ENCODE measurements at regions of chr4 and their contacts with region 1.

Region 1: GRCh38 chr4:76984127-76984526 is 34.6 kb downstream of the SEPTIN11 start:
- DNase-seq: peak; percentile 84
- H3K4me3 ChIP-seq: peak overlapping the region in 1 of 3 experiments; percentile 1
- H3K27ac ChIP-seq: peak overlapping the region; percentile 65
- H3K4me1 ChIP-seq: peaks cover 41% of the 10 kb centered on the region
- H3K27me3 ChIP-seq: no peaks in the 10 kb centered on the region
- CTCF ChIP-seq: peak; percentile 46 to 51
- POLR2A ChIP-seq: no peak

Region 2: GRCh38 chr4:76511947-76512346 is 472.2 kb before region 1 on chr4:
- CTCF ChIA-PET with region 1: no interaction called
- POLR2A ChIA-PET with region 1: no interaction called
- dilution Hi-C with region 1: no loop called
- intact Hi-C with region 1: loop called (anchors 1 kb)
- DNase-seq: no peak
- H3K4me3 ChIP-seq: no peak overlapping the region
- H3K27ac ChIP-seq: no peak overlapping the region
- H3K4me1 ChIP-seq: no peaks in the 10 kb centered on the region
- H3K27me3 ChIP-seq: no peaks in the 10 kb centered on the region
- CTCF ChIP-seq: no peak
- POLR2A ChIP-seq: no peak

Region 3: DNA sequence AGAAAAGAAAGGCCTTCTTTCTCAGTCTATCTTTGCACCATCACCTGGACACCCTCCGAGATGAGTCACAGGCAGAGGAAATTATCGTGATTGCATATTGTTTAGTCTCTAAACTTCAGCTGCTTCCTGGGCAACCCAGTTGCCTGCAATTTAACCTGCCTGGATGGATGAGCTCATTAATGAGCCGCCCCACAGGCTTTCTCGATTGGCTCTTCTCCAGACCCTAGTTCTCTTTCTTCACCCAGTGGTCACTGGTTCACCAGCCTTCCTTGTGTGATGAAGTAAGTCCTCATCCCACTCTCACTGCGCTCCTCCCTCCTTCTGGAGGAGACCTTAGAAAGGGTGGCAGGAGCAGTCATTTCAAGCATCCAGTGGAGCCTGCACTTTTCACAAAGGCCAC is 180.6 kb before region 1 on chr4:
- CTCF ChIA-PET with region 1: no interaction called
- POLR2A ChIA-PET with region 1: no interaction called
- dilution Hi-C with region 1: no loop called
- intact Hi-C with region 1: loop called (anchors 1 kb)
- DNase-seq: peak; percentile 89
- H3K4me3 ChIP-seq: no peak overlapping the region
- H3K27ac ChIP-seq: peak overlapping the region; percentile 66
- H3K4me1 ChIP-seq: peaks cover 19% of the 10 kb centered on the region
- H3K27me3 ChIP-seq: no peaks in the 10 kb centered on the region
- CTCF ChIP-seq: no peak
- POLR2A ChIP-seq: no peak

Region 4: DNA sequence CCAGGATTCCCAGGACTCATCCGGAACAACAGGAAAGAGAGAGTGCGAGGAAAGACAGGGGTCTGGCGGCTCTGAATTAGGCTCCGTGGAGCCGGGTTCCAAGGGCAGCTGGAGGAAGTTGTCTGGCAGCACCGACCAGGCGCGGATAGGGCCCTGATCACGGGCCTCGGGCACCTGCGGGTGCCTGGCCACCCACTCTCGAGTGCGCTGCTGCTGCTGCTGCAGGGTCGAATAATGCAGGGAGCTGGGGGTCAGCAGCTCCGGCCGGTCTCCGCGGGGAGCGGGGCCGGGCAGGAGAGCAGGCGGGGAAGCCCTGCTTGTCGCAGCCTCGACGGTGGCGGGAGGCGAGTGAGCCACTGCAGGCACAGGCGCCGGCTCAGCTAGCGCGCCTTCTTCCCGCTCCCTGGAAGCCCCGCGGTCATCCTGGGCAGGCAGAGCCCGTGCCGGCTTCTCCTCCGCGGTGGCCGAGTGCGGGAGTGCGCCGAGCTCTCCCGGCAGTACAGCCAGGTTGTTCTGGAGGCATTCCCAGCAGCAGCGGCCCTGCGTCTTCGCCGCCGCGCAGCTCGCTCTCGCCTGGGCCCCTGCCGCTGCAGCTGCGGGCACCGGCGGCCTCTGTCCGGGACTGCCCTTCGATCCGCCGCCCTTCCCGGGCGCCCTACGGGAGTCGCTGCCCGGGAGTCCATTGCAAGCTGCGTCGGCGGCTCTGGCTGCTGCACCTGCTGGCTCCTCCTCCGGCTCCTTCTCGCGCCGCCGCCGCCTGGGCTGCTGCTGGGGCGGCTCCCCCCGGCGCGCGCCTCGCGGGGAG is 87.2 kb before region 1 on chr4:
- CTCF ChIA-PET with region 1: no interaction called
- POLR2A ChIA-PET with region 1: no interaction called
- dilution Hi-C with region 1: no loop called
- intact Hi-C with region 1: loop called (anchors 1 kb)
- DNase-seq: peak; percentile 35
- H3K4me3 ChIP-seq: peak overlapping the region in 2 of 3 experiments; percentile 2 to 35
- H3K27ac ChIP-seq: no peak overlapping the region
- H3K4me1 ChIP-seq: peaks cover 4% of the 10 kb centered on the region
- H3K27me3 ChIP-seq: peaks cover 42 to 75% of the 10 kb centered on the region in 2 experiments
- CTCF ChIP-seq: no peak
- POLR2A ChIP-seq: no peak

Region 5: GRCh38 chr4:76969941-76970529 is 14.1 kb before region 1 on chr4:
- CTCF ChIA-PET with region 1: no interaction called
- POLR2A ChIA-PET with region 1: no interaction called
- dilution Hi-C with region 1: no loop called
- intact Hi-C with region 1: no loop called
- DNase-seq: no peak
- H3K4me3 ChIP-seq: no peak overlapping the region
- H3K27ac ChIP-seq: no peak overlapping the region
- H3K4me1 ChIP-seq: peaks cover 5% of the 10 kb centered on the region
- H3K27me3 ChIP-seq: no peaks in the 10 kb centered on the region
- CTCF ChIP-seq: no peak
- POLR2A ChIP-seq: no peak

Region 6: GRCh38 chr4:76996445-76996844 is 12.3 kb after region 1 on chr4:
- CTCF ChIA-PET with region 1: interaction called, 10 read pairs
- POLR2A ChIA-PET with region 1: no interaction called
- dilution Hi-C with region 1: no loop called
- intact Hi-C with region 1: no loop called
- DNase-seq: no peak
- H3K4me3 ChIP-seq: no peak overlapping the region
- H3K27ac ChIP-seq: no peak overlapping the region
- H3K4me1 ChIP-seq: peaks cover 4% of the 10 kb centered on the region
- H3K27me3 ChIP-seq: no peaks in the 10 kb centered on the region
- CTCF ChIP-seq: no peak
- POLR2A ChIP-seq: no peak

Region 7: DNA sequence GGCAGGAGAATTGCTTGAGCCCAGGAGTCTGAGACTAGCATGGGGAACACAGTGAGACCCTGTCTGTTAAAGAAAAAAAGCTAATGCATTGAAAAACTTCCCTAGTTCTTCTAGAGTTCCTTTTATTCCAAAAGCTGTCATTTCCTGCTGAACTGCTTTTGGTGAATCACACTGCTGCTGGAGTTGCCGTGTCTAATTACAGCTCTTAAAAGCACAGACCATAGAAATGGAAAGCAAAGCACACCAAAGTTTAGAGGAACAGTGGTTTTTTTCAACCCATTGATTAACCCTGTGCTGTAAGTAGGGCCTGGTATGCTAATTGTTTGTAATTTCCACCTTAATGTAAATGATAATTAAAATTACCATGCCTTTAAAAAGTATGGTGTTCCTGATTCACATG is 17.8 kb after region 1 on chr4:
- CTCF ChIA-PET with region 1: interaction called, 5 read pairs
- POLR2A ChIA-PET with region 1: no interaction called
- dilution Hi-C with region 1: no loop called
- intact Hi-C with region 1: loop called (anchors 1 kb)
- DNase-seq: peak; percentile 87
- H3K4me3 ChIP-seq: peak overlapping the region in 1 of 3 experiments; percentile 13
- H3K27ac ChIP-seq: peak overlapping the region; percentile 80
- H3K4me1 ChIP-seq: peaks cover 49% of the 10 kb centered on the region
- H3K27me3 ChIP-seq: no peaks in the 10 kb centered on the region
- CTCF ChIP-seq: no peak
- POLR2A ChIP-seq: no peak

Region 8: GRCh38 chr4:77022560-77023179 is 38.5 kb after region 1 on chr4:
- CTCF ChIA-PET with region 1: interaction called, 4 read pairs
- POLR2A ChIA-PET with region 1: no interaction called
- dilution Hi-C with region 1: no loop called
- intact Hi-C with region 1: loop called (anchors 5 kb)
- DNase-seq: peak; percentile 76
- H3K4me3 ChIP-seq: no peak overlapping the region
- H3K27ac ChIP-seq: peak overlapping the region; percentile 55
- H3K4me1 ChIP-seq: peaks cover 10% of the 10 kb centered on the region
- H3K27me3 ChIP-seq: no peaks in the 10 kb centered on the region
- CTCF ChIP-seq: peak in 1 of 2 donors; percentile 24
- POLR2A ChIP-seq: no peak

Measured in endothelial cell of umbilical vein (primary cell).